Activated naive CD4-positive, alpha-beta T cell treated with anti-CD3 and anti-CD28 coated beads for 36 hours (primary cell): ENCODE measurements at regions of chr15 and their contacts with region 1.

Region 1: DNA sequence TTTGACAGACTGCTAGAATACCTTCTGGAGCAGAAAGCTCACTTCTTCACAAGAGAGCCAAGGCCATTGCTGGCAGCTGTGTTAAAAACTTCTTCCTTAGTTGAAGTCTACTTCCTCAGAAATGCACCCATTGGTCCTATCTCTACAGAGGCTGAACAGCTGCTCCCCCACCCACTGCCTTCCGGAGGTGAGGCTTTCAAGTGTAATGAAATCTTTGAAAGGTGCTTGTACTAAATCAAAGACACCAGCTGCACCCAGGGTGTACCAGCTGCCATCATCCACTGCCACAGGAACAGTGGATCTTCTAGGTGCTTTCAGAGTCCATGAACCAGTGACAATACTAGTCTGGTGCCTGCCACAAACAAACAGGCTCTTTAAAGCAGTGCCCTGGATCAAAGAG is 26.4 kb upstream of the HERC1 start:
- DNase-seq: peak; percentile 82
- H3K4me3 Mint-ChIP-seq: peak overlapping the region; percentile 32
- H3K27ac Mint-ChIP-seq: peak overlapping the region; percentile 89
- H3K4me1 Mint-ChIP-seq: peaks cover 57% of the 10 kb centered on the region
- H3K27me3 Mint-ChIP-seq: no peaks in the 10 kb centered on the region

Region 2: GRCh38 chr15:63870403-63871209 is 10.5 kb after region 1 on chr15:
- CTCF ChIA-PET with region 1: interaction called, 3 read pairs
- intact Hi-C with region 1: loop called (anchors 1 kb)
- DNase-seq: no peak
- H3K4me3 Mint-ChIP-seq: no peak overlapping the region
- H3K27ac Mint-ChIP-seq: peak overlapping the region; percentile 63
- H3K4me1 Mint-ChIP-seq: peaks cover 19% of the 10 kb centered on the region
- H3K27me3 Mint-ChIP-seq: no peaks in the 10 kb centered on the region

Region 3: DNA sequence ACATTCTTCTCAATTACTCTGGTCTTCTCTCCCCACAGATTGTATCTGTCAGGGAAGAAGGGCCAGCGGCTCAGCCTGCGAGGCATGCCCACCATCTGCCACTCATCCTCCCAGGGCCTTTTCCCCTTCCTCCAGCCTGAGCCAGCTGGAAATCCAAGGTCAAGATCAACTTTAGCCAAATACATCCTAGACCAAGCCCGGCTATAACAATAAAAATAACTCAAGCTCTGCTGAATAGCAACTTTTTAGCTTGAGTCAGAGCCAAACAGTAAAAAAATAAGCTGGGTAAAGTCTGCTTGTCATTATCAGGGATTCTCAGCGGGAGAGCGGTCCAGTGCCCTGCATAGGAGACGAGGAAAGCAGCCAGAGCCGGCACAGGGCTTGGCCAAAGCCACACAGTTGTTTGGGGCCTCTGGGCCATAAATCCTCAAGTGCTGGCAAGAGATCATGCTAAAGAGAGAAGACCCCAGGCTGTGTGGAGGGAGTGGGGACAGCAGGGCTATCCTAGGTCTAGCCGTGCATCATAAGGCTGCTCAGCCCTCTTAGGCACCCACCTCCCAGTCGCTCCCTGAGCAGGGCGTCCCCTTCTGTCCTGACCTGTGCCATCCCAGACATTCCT is 49.8 kb after region 1 on chr15:
- CTCF ChIA-PET with region 1: no interaction called
- intact Hi-C with region 1: no loop called
- DNase-seq: no peak
- H3K4me3 Mint-ChIP-seq: no peak overlapping the region
- H3K27ac Mint-ChIP-seq: no peak overlapping the region
- H3K4me1 Mint-ChIP-seq: peaks cover 18% of the 10 kb centered on the region
- H3K27me3 Mint-ChIP-seq: no peaks in the 10 kb centered on the region